H1 (cell line): ENCODE measurements at regions of chr17 and their contacts with region 1.

Region 1: DNA sequence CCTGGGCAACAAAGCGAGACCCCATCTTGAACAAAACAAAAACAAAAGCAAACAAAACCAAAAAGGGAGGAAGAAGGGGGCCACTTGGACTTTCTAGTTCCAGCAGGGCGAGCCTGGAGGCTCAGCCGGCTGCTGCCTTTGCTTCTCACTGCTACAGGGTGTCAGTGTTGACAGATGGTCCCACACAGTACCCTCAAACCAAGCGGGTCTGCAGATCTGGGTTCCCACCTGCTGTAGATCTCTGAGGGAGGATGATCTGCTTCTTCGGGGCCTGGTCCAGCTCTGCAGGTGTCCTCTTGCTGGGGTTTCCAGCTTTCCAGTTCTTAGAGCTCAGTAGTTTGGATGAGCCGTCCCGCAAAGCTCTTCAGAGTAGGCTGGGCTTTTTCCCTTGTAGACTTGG is 6.7 kb downstream of the CSHL1 start:
- DNase-seq: no peak
- H3K4me3 ChIP-seq: no peak overlapping the region
- H3K27ac ChIP-seq: no peak overlapping the region
- H3K4me1 ChIP-seq: peaks cover 0 to 4% (median under 1%) of the 10 kb centered on the region in 4 experiments; a peak in 2 of 7 replicates
- H3K27me3 ChIP-seq: no peaks in the 10 kb centered on the region
- CTCF ChIP-seq: no peak
- EP300 ChIP-seq: no peak
- POLR2A ChIP-seq: no peak
- RAD21 ChIP-seq: no peak

Region 2: GRCh38 chr17:63881876-63882601 is 22.3 kb before region 1 on chr17 and contains the start of gene GH2:
- CTCF ChIA-PET with region 1: interaction called, 87 read pairs
- POLR2A ChIA-PET with region 1: interaction called, 3 read pairs
- DNase-seq: peak in 1 of 2 experiments; percentile 88
- H3K4me3 ChIP-seq: peak within 1 kb of the TSS in 2 of 4 experiments; percentile 2 to 33; a peak in 3 of 8 replicates
- H3K27ac ChIP-seq: no peak within 1 kb of the TSS
- H3K4me1 ChIP-seq: peaks cover 3 to 15% (median 8%) of the 10 kb centered on the region in 4 experiments
- H3K27me3 ChIP-seq: no peaks in the 10 kb centered on the region
- CTCF ChIP-seq: peak; percentile 59 to 76 (median 72)
- EP300 ChIP-seq: no peak
- POLR2A ChIP-seq: no peak
- RAD21 ChIP-seq: peak; percentile 10 to 30; a peak in 2 of 4 replicates
- total RNA-seq, gene GH2: 0.60 and 1.2 TPM in 2 replicates